Panc1 (cell line): ENCODE measurements at regions of chr3 and their contacts with region 1.

Region 1: GRCh38 chr3:118628704-118629341 is 405.8 kb downstream of the IGSF11 start:
- DNase-seq: peak; percentile 64
- ATAC-seq: peak; percentile 91
- H3K4me3 ChIP-seq: no peak overlapping the region
- H3K27ac ChIP-seq: no peak overlapping the region
- H3K4me1 ChIP-seq: no peaks in the 10 kb centered on the region
- H3K27me3 ChIP-seq: no peaks in the 10 kb centered on the region
- CTCF ChIP-seq: peak; percentile 90

Region 2: DNA sequence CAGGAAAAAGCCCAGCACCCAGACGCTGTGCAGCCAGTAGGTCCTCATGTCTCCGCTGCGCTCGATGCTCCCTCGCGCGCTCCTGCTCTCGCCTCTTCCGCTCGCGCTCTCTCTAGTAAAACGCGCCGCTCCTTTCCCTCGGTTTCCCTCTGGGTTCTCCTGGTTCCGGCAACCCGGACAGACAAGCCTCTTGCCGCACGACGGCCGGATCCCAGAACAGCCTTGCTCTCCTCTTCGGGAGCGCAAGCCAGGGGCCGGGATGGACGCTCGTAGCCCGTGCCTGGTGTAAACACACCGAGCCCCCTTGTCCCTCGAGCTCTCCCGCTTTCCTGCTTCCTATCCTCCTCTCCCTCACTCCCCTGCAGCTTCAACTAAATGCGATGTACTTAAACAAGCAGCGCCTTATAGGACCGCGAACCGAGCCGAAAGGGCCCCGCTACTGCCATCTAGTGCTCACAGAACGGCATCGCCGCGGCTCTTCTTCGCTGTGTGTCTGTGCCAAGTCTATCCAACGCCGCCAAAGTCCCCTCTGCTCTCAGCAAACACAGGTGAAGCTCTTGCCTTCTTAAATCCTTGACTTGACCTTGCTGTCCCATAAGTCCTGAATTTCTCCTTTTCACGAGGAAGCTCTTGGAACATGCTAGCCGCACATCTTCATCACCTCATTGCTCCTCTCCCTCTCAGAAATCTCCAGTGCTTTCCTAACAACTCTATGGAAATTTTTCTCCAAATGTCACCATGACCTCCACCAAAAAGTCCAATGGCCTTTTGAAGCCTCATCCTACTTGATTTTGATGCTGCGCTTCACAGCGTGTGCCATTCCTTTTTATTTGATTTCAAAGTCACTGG is 631.4 kb before region 1 on chr3:
- CTCF ChIA-PET with region 1: no interaction called
- POLR2A ChIA-PET with region 1: no interaction called
- in situ Hi-C with region 1: no loop called
- intact Hi-C with region 1: loop called (anchors 10 kb)
- DNase-seq: peak; percentile 41
- ATAC-seq: peak; percentile 96
- H3K4me3 ChIP-seq: peak overlapping the region; percentile 32; a peak in 3 of 4 replicates
- H3K27ac ChIP-seq: no peak overlapping the region
- H3K4me1 ChIP-seq: no peaks in the 10 kb centered on the region
- H3K27me3 ChIP-seq: peaks cover 2% of the 10 kb centered on the region; the same call in 1 of the 2 replicates
- CTCF ChIP-seq: peak; percentile 92

Region 3: DNA sequence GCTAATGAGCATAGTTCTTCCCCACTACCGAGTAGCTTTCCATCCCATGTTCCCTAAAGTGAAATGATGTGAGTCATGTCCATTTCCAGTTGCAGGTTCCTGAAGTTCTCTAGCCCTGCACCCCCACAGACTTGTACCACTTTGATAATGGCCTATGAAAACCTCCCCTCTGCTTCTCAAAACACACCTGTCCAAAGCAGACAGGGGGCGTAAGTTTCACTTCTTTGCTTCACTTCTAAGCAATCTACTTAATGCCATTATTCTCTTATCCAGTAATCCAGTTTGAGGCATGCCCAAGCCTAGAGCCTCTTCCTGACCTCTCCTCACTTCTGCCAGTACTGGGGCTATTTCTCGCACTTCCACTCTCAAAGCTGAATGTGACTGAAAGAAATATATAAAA is 100.7 kb after region 1 on chr3:
- CTCF ChIA-PET with region 1: no interaction called
- POLR2A ChIA-PET with region 1: no interaction called
- in situ Hi-C with region 1: no loop called
- intact Hi-C with region 1: no loop called
- DNase-seq: no peak
- ATAC-seq: no peak
- H3K4me3 ChIP-seq: no peak overlapping the region
- H3K27ac ChIP-seq: no peak overlapping the region
- H3K4me1 ChIP-seq: no peaks in the 10 kb centered on the region
- H3K27me3 ChIP-seq: no peaks in the 10 kb centered on the region
- CTCF ChIP-seq: 0 out of 2 replicates have a peak, but pooled peaks have one; percentile 7

Region 4: DNA sequence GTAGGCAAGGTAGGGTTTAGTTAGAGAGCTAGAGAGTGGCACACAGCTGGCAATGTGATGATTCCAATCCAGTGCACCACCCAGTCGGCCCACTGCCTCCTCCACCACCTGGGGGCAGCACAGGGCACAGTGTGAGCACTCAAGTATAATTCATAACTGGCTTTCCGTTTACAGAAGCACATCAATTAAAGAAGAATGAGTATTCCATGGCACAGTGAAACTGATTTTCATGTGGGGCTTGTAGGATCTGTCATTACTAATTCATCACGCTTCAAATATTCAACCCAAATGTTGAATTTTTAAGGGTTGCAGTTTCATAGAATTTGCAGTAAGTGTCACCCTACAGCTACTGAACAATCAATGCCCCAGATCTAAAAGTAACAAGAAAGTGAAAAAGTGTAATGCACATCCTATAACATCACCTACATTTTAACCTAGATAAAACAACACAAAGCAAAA is 256.0 kb after region 1 on chr3:
- CTCF ChIA-PET with region 1: no interaction called
- POLR2A ChIA-PET with region 1: no interaction called
- in situ Hi-C with region 1: no loop called
- intact Hi-C with region 1: no loop called
- DNase-seq: peak; percentile 43
- ATAC-seq: peak; percentile 92
- H3K4me3 ChIP-seq: no peak overlapping the region
- H3K27ac ChIP-seq: no peak overlapping the region
- H3K4me1 ChIP-seq: no peaks in the 10 kb centered on the region
- H3K27me3 ChIP-seq: peaks cover 20% of the 10 kb centered on the region
- CTCF ChIP-seq: peak; percentile 98